ENCODE measurements at regions of chr5 and their contacts with region 1.

Region 1: GRCh38 chr5:148730943-148731861 is 76.9 kb upstream of the HTR4 start:
- DNase-seq: peak; percentile 47
- H3K4me3 Mint-ChIP-seq: no peak overlapping the region
- H3K27ac Mint-ChIP-seq: no peak overlapping the region
- H3K4me1 Mint-ChIP-seq: peaks cover 6% of the 10 kb centered on the region
- H3K27me3 Mint-ChIP-seq: peaks cover 9% of the 10 kb centered on the region

Region 2: GRCh38 chr5:148290271-148291195 is 440.7 kb before region 1 on chr5:
- intact Hi-C with region 1: loop called (anchors 5 kb)
- DNase-seq: no peak
- H3K4me3 Mint-ChIP-seq: no peak overlapping the region
- H3K27ac Mint-ChIP-seq: no peak overlapping the region
- H3K4me1 Mint-ChIP-seq: no peaks in the 10 kb centered on the region
- H3K27me3 Mint-ChIP-seq: no peaks in the 10 kb centered on the region

Region 3: DNA sequence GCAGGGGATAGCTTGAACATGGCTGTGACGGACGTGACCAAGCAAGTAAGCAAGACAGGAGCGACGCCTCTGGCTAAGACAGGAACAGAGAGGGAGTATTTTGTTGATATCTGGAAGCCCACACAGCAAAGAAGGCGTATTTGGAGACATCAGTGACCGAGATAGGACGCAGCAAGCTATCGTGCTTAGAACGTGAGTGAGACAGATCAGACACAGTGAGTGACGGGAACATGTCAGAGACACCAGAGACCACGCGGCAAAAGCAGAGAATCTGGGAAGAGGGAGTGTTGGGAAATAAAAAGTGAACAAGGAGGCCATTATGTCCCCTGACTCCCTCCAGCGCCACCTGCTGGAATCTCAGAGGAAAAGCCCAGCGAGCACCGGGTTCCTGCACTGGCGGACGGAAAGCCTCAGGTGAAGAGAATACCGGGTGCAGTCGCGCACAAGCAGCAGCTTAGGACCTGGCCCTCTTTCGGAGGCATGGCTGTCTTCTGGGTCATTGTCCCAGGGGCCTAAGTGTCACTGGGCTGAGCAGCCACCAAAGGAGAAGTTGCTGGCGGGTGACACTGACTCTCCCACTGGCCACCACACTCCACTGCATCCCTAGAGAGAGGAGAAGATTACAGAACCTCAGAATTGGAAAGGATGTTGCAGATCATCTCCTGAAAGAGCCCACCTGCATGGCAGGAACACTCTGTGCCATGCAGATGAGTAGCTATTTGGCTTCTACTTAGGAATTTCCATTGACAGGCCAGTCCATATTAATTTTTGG is 248.3 kb before region 1 on chr5:
- intact Hi-C with region 1: loop called (anchors 1 kb)
- DNase-seq: peak; percentile 49
- H3K4me3 Mint-ChIP-seq: no peak overlapping the region
- H3K27ac Mint-ChIP-seq: no peak overlapping the region
- H3K4me1 Mint-ChIP-seq: no peaks in the 10 kb centered on the region
- H3K27me3 Mint-ChIP-seq: peaks cover 15% of the 10 kb centered on the region

Region 4: DNA sequence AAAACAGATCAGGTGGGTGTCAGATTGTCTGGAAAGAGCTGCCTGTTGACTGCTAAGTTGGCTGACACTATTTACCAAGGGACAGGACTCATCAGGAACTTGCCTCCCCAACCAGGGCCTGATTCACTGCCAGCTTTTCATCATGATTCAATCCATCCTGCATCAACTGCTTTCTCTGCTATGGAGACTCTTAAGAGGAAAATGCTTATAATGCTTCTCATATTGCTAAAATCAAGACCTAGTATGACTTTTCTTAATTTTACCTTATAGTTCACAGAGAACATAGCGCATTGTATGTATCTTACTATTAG is 98.2 kb before region 1 on chr5:
- intact Hi-C with region 1: no loop called
- DNase-seq: no peak
- H3K4me3 Mint-ChIP-seq: no peak overlapping the region
- H3K27ac Mint-ChIP-seq: no peak overlapping the region
- H3K4me1 Mint-ChIP-seq: peaks cover 7% of the 10 kb centered on the region
- H3K27me3 Mint-ChIP-seq: peaks cover 28% of the 10 kb centered on the region

Region 5: DNA sequence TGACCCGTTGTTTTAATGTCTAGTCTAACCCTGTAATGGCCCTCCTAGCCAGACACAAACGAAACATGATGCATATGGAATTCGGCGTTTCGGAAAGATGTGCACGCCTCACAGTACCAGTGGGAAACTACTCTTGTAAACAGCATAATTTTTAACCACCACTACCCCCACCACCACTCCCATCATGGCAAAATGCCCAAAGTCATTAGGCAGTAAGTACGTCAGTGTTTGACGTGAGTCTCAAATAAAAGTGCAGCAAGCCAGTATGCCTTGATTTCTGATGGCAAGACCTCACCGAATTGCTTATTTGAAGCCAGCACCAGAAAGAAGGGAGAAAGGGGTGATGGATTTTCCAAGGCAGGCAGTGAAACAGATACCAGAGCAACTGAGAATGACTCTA is 166.6 kb after region 1 on chr5:
- intact Hi-C with region 1: no loop called
- DNase-seq: no peak
- H3K4me3 Mint-ChIP-seq: no peak overlapping the region
- H3K27ac Mint-ChIP-seq: no peak overlapping the region
- H3K4me1 Mint-ChIP-seq: no peaks in the 10 kb centered on the region
- H3K27me3 Mint-ChIP-seq: peaks cover 4% of the 10 kb centered on the region

Region 6: DNA sequence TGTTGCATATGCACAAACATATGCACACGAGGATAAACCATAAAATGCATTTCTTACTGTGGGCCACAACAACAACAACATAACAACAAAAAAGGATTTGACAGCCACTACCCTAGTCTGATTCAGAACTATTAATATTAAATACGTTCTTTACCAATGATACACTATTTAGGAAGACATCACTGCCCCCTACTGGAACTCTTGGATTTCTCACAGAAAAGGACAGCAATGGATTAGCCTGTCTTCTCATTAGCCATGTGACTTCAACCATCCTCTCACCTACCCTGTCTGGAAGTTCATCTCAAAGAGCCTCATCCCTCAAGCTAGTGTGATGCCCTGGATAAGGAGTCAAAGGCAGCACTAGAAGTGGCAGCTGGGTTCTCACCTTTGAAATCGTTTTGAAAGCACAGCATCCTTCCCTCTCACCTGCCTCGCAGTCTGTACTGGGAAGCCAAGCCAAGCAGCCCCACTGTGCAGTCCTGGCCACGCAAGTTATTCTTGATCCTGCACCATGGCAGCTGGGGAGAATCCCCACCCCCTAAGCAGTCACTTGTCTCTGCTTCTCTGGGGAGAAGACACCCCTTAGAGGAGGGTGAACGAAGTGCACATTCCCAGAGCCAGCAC is 267.1 kb after region 1 on chr5:
- intact Hi-C with region 1: loop called (anchors 1 kb)
- DNase-seq: no peak
- H3K4me3 Mint-ChIP-seq: no peak overlapping the region
- H3K27ac Mint-ChIP-seq: no peak overlapping the region
- H3K4me1 Mint-ChIP-seq: no peaks in the 10 kb centered on the region
- H3K27me3 Mint-ChIP-seq: peaks cover 11% of the 10 kb centered on the region

Region 7: GRCh38 chr5:149114403-149115312 is 383.5 kb after region 1 on chr5:
- intact Hi-C with region 1: loop called (anchors 1 kb)
- DNase-seq: peak; percentile 3
- H3K4me3 Mint-ChIP-seq: no peak overlapping the region
- H3K27ac Mint-ChIP-seq: no peak overlapping the region
- H3K4me1 Mint-ChIP-seq: no peaks in the 10 kb centered on the region
- H3K27me3 Mint-ChIP-seq: peaks cover 29% of the 10 kb centered on the region